CD4-positive, alpha-beta T cell (primary cell): ENCODE measurements at regions of chr6 and their contacts with region 1.

Region 1: DNA sequence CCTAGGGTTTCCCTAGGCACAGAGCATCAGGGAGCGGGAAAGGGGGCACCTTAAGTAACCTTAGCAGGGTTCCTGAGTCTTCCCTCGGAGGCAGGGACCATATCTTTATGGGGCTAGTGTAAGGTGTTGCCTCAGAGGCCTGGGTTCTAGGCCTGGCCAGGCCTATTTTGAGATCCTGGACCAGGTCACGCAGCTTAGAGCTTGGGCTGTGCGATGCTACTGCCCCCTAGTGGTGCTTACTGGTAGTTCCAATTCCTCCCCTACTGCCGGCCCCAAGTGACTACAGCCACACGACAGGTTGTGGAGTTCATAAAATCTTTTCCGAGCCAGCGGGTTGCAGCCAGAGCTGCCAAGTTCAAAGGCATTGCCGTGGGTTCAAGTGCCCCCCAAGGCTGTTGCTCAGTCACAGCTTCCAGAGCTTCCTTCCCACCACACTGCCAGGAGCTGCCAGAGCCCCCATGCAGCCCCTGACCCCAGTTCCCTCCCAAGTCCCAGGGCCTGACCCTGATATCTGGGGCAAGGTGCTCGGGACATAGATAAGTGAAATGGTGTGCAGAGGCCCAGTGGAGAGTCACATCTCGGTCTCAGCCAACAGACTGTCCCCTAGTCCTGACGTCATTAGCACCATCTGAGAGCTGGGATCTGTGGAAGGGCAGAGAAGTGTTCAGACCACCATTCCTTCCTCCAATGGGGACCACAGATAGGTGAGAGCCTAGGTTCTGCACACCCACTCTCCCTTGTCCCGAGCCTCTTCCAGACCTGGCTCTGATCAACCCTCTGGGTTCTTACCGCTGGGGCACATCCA is 3.3 kb downstream of the LRRC73 start:
- DNase-seq: peak; percentile 58 to 92 (median 74)
- ATAC-seq: peak; percentile 71
- H3K4me3 ChIP-seq: no peak overlapping the region
- H3K4me3 Mint-ChIP-seq: peak overlapping the region; percentile 68
- H3K27ac ChIP-seq: no peak overlapping the region
- H3K27ac Mint-ChIP-seq: no peak overlapping the region
- H3K4me1 ChIP-seq: peaks cover 29% of the 10 kb centered on the region
- H3K4me1 Mint-ChIP-seq: peaks cover 15% of the 10 kb centered on the region
- H3K27me3 ChIP-seq: peaks cover 20% of the 10 kb centered on the region in 2 experiments
- H3K27me3 Mint-ChIP-seq: peaks cover 23% of the 10 kb centered on the region
- CTCF ChIP-seq: peak; percentile 94

Region 2: DNA sequence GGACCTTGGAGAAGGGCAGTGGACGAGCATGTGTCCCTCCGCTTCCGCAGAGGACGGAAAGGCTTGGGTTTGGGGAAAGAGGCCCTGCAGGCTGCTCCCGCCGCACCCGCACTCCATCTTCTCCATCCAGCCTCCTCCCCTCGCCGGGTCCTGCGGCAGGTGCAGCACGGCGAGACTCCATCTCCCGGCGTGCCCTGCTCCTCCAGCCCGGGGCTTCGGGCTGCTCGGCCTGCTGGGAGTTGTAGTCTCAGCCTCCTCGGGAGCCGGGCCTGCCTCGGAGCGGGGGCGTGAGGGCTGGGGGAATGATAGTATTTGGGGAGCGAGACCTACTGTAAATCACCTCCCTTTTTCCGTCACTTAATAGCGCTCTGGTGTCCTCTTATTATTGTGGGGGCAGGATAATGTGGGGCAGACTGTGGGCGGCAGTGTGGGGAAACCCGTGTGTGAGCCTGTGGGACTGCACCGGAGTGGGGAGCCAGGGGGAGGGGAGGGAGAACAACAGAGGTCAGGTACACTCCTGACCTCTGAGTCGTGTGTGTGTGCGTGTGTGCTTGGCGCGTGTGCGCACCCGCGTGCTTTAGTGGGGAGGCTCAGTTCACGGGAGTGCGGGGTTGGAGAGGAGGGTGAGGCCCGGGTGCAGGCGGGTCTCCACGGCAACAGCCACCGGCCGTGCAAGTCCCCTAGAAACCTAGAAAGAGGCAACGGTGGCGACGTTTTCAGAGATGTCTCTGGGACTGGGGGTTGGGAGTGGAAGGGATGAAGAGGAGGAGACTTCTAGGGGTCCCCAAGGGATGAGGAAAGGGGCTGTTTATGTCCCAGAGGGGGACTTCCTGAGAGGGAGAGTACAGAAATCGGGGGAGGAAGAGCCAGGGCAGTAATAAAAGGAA is 259.5 kb before region 1 on chr6:
- CTCF ChIA-PET with region 1: no interaction called
- POLR2A ChIA-PET with region 1: interaction called, 4 read pairs
- intact Hi-C with region 1: loop called in 1 of 2 experiments (anchors 5 kb)
- DNase-seq: peak; percentile 65 to 89 (median 76)
- ATAC-seq: peak; percentile 97
- H3K4me3 ChIP-seq: peak overlapping the region; percentile 58
- H3K4me3 Mint-ChIP-seq: no peak overlapping the region
- H3K27ac ChIP-seq: peak overlapping the region; percentile 24 to 42
- H3K27ac Mint-ChIP-seq: peak overlapping the region; percentile 70
- H3K4me1 ChIP-seq: peaks cover 26% of the 10 kb centered on the region
- H3K4me1 Mint-ChIP-seq: peaks cover 22% of the 10 kb centered on the region
- H3K27me3 ChIP-seq: peaks cover 34 to 35% of the 10 kb centered on the region in 2 experiments
- H3K27me3 Mint-ChIP-seq: peaks cover 15% of the 10 kb centered on the region
- CTCF ChIP-seq: no peak

Region 3: GRCh38 chr6:43286980-43287716 is 219.7 kb before region 1 on chr6:
- CTCF ChIA-PET with region 1: no interaction called
- POLR2A ChIA-PET with region 1: no interaction called
- intact Hi-C with region 1: no loop called
- DNase-seq: no peak
- ATAC-seq: no peak
- H3K4me3 ChIP-seq: no peak overlapping the region
- H3K4me3 Mint-ChIP-seq: no peak overlapping the region
- H3K27ac ChIP-seq: no peak overlapping the region
- H3K27ac Mint-ChIP-seq: no peak overlapping the region
- H3K4me1 ChIP-seq: no peaks in the 10 kb centered on the region
- H3K4me1 Mint-ChIP-seq: no peaks in the 10 kb centered on the region
- H3K27me3 ChIP-seq: peaks cover 9 to 13% of the 10 kb centered on the region in 2 experiments
- H3K27me3 Mint-ChIP-seq: peaks cover 30% of the 10 kb centered on the region
- CTCF ChIP-seq: no peak

Region 4: DNA sequence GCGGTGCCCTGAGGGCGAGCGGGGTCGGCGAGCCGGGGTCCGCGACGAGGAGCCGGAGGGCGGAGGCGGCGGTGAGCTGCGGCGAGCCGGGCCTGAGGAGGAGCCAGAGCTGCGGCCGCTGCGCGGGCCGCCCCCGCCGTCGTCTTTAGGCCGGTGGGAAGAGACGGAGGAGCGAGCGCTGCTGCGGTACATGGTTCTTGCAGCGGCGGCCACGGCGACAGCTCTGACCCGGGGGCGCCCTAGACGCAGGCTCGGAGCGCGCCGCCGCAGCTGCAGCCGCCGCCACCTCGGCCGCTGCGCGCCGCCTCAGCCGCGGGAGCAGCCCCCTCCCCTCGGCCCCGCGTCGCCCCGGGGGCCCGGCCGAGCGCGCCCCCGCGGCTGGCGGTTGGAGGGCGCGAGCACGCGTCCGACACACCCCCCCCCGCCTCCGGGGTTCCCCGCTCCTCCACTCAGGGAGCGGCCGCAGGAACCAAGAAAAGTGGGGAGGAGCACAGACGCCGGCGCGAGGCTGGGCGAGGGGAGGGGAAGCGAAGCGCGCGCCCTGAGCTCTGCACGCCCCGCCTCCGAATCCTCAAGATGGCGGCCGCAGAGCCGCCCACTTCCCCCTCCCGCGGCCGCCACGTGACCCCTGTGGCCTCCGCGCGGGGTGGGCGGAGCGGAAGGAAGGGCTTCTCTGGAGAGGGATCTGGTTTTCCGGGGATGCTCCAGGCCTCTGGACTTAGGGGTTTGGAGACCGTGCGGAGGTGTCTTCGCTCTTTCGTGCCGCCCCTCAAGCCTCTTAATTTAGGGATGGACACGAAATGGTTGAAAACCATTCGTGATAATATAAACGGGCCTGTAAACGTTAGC is 137.5 kb before region 1 on chr6 and contains the start of gene ZNF318:
- CTCF ChIA-PET with region 1: no interaction called
- POLR2A ChIA-PET with region 1: interaction called, 10 read pairs
- intact Hi-C with region 1: loop called (anchors 5 kb)
- DNase-seq: peak; percentile 88 to 99 (median 92)
- ATAC-seq: peak; percentile 95
- H3K4me3 ChIP-seq: peak within 1 kb of the TSS; percentile 77
- H3K4me3 Mint-ChIP-seq: peak within 1 kb of the TSS; percentile 96
- H3K27ac ChIP-seq: peak within 1 kb of the TSS; percentile 76 to 85
- H3K27ac Mint-ChIP-seq: peak within 1 kb of the TSS; percentile 95
- H3K4me1 ChIP-seq: peaks cover 38% of the 10 kb centered on the region
- H3K4me1 Mint-ChIP-seq: peaks cover 49% of the 10 kb centered on the region
- H3K27me3 ChIP-seq: no peaks in the 10 kb centered on the region
- H3K27me3 Mint-ChIP-seq: no peaks in the 10 kb centered on the region
- CTCF ChIP-seq: no peak
- total RNA-seq, gene ZNF318: 20.4 TPM

Region 5: DNA sequence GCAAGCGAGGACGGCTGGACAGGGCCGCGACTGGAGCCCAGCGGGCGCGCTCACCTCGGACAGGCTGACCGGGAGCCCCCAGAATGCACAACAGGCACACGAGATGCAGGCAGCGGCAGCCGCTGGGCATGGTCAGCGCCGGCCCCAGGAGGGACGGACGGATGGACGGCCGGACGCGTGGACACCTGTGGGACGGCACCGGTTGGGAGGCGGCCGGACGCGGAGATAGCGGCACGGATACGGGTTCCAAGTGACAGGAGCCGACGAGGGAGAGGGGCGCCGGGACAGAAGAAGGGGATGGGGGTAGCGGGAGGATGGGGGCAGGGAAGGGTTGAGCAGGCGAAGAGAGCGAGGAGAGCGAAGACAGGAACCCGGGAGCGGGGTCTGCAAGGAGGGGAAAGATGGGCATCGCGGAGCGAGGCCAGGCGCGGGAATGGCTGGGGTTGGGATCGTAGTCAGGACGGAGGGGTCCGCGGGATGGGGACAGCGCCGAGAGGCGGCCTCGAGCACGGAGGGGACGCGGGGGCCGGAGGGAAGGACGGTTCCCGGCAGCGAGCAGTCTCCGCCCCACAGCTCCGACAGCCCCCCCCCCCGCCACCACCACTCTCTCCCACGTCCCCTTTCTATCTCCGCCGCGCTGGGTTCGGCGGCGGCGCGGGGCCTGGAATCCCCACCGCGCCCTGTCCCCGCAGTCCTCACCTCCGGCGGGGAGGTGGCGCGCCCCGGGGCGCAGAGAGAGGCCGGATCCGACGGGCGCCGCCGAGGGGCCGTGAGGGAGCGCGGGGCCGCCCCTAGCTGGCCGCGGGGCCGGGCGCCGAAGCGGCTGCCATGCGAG is 52.0 kb before region 1 on chr6:
- CTCF ChIA-PET with region 1: interaction called, 13 read pairs
- POLR2A ChIA-PET with region 1: interaction called, 5 read pairs
- intact Hi-C with region 1: loop called (anchors 1 kb)
- DNase-seq: peak in 10 of 14 experiments; percentile 13 to 75 (median 43)
- ATAC-seq: peak; percentile 61
- H3K4me3 ChIP-seq: peak overlapping the region; percentile 73
- H3K4me3 Mint-ChIP-seq: peak overlapping the region; percentile 81
- H3K27ac ChIP-seq: peak overlapping the region in 1 of 2 donors; percentile 23
- H3K27ac Mint-ChIP-seq: peak overlapping the region; percentile 61
- H3K4me1 ChIP-seq: peaks cover 19% of the 10 kb centered on the region
- H3K4me1 Mint-ChIP-seq: peaks cover 21% of the 10 kb centered on the region
- H3K27me3 ChIP-seq: no peaks in the 10 kb centered on the region
- H3K27me3 Mint-ChIP-seq: no peaks in the 10 kb centered on the region
- CTCF ChIP-seq: peak; percentile 54

Region 6: GRCh38 chr6:43516697-43517504 is 10.0 kb after region 1 on chr6 and contains the starts of genes POLR1C and YIPF3:
- CTCF ChIA-PET with region 1: interaction called, 10 read pairs
- POLR2A ChIA-PET with region 1: interaction called, 16 read pairs
- intact Hi-C with region 1: no loop called
- DNase-seq: peak; percentile 91 to 98 (median 96)
- ATAC-seq: peak; percentile 96
- H3K4me3 ChIP-seq: peak within 1 kb of the TSS; percentile 100
- H3K4me3 Mint-ChIP-seq: no peak within 1 kb of the TSS
- H3K27ac ChIP-seq: peak within 1 kb of the TSS; percentile 81 to 90
- H3K27ac Mint-ChIP-seq: no peak within 1 kb of the TSS
- H3K4me1 ChIP-seq: peaks cover 43% of the 10 kb centered on the region
- H3K4me1 Mint-ChIP-seq: peaks cover 33% of the 10 kb centered on the region
- H3K27me3 ChIP-seq: no peaks in the 10 kb centered on the region
- H3K27me3 Mint-ChIP-seq: no peaks in the 10 kb centered on the region
- CTCF ChIP-seq: no peak
- total RNA-seq, gene POLR1C: 46.6 to 47.8 TPM
- total RNA-seq, gene YIPF3: 36.5 to 37.9 TPM

Region 7: GRCh38 chr6:43584892-43585570 is 78.2 kb after region 1 on chr6:
- CTCF ChIA-PET with region 1: no interaction called
- POLR2A ChIA-PET with region 1: no interaction called
- intact Hi-C with region 1: no loop called
- DNase-seq: peak in 5 of 14 experiments; percentile 8 to 66 (median 30)
- ATAC-seq: peak; percentile 64
- H3K4me3 ChIP-seq: no peak overlapping the region
- H3K4me3 Mint-ChIP-seq: no peak overlapping the region
- H3K27ac ChIP-seq: peak overlapping the region in 1 of 2 donors; percentile 60
- H3K27ac Mint-ChIP-seq: peak overlapping the region; percentile 76
- H3K4me1 ChIP-seq: peaks cover 27% of the 10 kb centered on the region
- H3K4me1 Mint-ChIP-seq: peaks cover 35% of the 10 kb centered on the region
- H3K27me3 ChIP-seq: no peaks in the 10 kb centered on the region
- H3K27me3 Mint-ChIP-seq: no peaks in the 10 kb centered on the region
- CTCF ChIP-seq: no peak